ENCODE measurements at regions of chr2 and their contacts with region 1.

Region 1: GRCh38 chr2:68828887-68829708 is 42.1 kb downstream of the BMP10 start:
- DNase-seq: peak; percentile 80 to 90 (median 83)
- H3K4me3 ChIP-seq: peak overlapping the region in 1 of 2 donors; percentile 32
- H3K4me3 Mint-ChIP-seq: peak overlapping the region; percentile 17 to 91 (median 80)
- H3K27ac ChIP-seq: peak overlapping the region; percentile 65
- H3K27ac Mint-ChIP-seq: peak overlapping the region; percentile 90 to 94 (median 92)
- H3K4me1 ChIP-seq: peaks cover 59% of the 10 kb centered on the region
- H3K4me1 Mint-ChIP-seq: peaks cover 50 to 73% (median 62%) of the 10 kb centered on the region in 4 donors
- H3K27me3 ChIP-seq: no peaks in the 10 kb centered on the region
- H3K27me3 Mint-ChIP-seq: no peaks in the 10 kb centered on the region

Region 2: GRCh38 chr2:68237404-68237803 is 591.7 kb before region 1 on chr2:
- CTCF ChIA-PET with region 1: no interaction called
- POLR2A ChIA-PET with region 1: no interaction called
- intact Hi-C with region 1: no loop called
- DNase-seq: no peak
- H3K4me3 ChIP-seq: no peak overlapping the region
- H3K4me3 Mint-ChIP-seq: peak overlapping the region in 3 of 8 donors; percentile 29 to 37 (median 34)
- H3K27ac ChIP-seq: no peak overlapping the region
- H3K27ac Mint-ChIP-seq: peak overlapping the region in 4 of 7 donors; percentile 5 to 87 (median 56)
- H3K4me1 ChIP-seq: peaks cover 90% of the 10 kb centered on the region
- H3K4me1 Mint-ChIP-seq: peaks cover 56 to 89% (median 74%) of the 10 kb centered on the region in 4 donors
- H3K27me3 ChIP-seq: no peaks in the 10 kb centered on the region
- H3K27me3 Mint-ChIP-seq: no peaks in the 10 kb centered on the region

Region 3: GRCh38 chr2:68734688-68735525 is 94.2 kb before region 1 on chr2 and contains the start of gene ARHGAP25:
- CTCF ChIA-PET with region 1: interaction called, 3 read pairs
- POLR2A ChIA-PET with region 1: interaction called, 10 read pairs
- intact Hi-C with region 1: no loop called
- DNase-seq: peak; percentile 58 to 79 (median 61)
- H3K4me3 ChIP-seq: peak within 1 kb of the TSS; percentile 83 to 99
- H3K4me3 Mint-ChIP-seq: no peak within 1 kb of the TSS
- H3K27ac ChIP-seq: peak within 1 kb of the TSS; percentile 81
- H3K27ac Mint-ChIP-seq: no peak within 1 kb of the TSS
- H3K4me1 ChIP-seq: peaks cover 54% of the 10 kb centered on the region
- H3K4me1 Mint-ChIP-seq: peaks cover 23 to 44% (median 34%) of the 10 kb centered on the region in 4 donors
- H3K27me3 ChIP-seq: no peaks in the 10 kb centered on the region
- H3K27me3 Mint-ChIP-seq: no peaks in the 10 kb centered on the region
- total RNA-seq, gene ARHGAP25: 162 to 163 TPM

Region 4: GRCh38 chr2:68742626-68743415 is 86.3 kb before region 1 on chr2:
- CTCF ChIA-PET with region 1: interaction called, 199 read pairs
- POLR2A ChIA-PET with region 1: interaction called, 13 read pairs
- intact Hi-C with region 1: no loop called
- DNase-seq: no peak
- H3K4me3 ChIP-seq: peak overlapping the region in 1 of 2 donors; percentile 29
- H3K4me3 Mint-ChIP-seq: peak overlapping the region; percentile 61 to 88 (median 79)
- H3K27ac ChIP-seq: no peak overlapping the region
- H3K27ac Mint-ChIP-seq: peak overlapping the region in 6 of 7 donors; percentile 78 to 93 (median 81)
- H3K4me1 ChIP-seq: peaks cover 99% of the 10 kb centered on the region
- H3K4me1 Mint-ChIP-seq: peaks cover 78 to 97% (median 89%) of the 10 kb centered on the region in 4 donors
- H3K27me3 ChIP-seq: no peaks in the 10 kb centered on the region
- H3K27me3 Mint-ChIP-seq: no peaks in the 10 kb centered on the region

Region 5: DNA sequence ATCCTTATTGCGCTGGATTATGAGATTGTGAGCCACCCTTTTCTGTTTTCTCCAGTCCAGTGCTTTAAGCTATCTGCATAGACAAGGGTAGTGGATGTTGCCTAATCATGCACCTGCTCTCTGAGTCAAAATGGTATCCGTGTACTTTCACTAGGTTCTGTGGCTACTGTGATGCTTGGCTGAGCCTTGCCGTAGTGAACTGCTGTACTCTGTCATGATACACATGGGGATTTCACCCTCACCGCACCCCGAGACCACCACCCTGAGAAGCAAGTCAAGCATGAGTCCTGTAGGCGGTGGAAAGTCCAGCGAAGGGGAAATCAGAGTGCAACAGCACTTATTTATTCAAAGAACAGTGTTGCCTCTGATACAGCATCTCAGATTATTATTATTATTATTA is 39.5 kb before region 1 on chr2:
- CTCF ChIA-PET with region 1: interaction called, 7 read pairs
- POLR2A ChIA-PET with region 1: no interaction called
- intact Hi-C with region 1: loop called (anchors 5 kb)
- DNase-seq: no peak
- H3K4me3 ChIP-seq: no peak overlapping the region
- H3K4me3 Mint-ChIP-seq: peak overlapping the region in 2 of 8 donors; percentile 4 to 12
- H3K27ac ChIP-seq: peak overlapping the region; percentile 15
- H3K27ac Mint-ChIP-seq: peak overlapping the region in 6 of 7 donors; percentile 71 to 90 (median 82)
- H3K4me1 ChIP-seq: peaks cover 78% of the 10 kb centered on the region
- H3K4me1 Mint-ChIP-seq: peaks cover 41 to 53% (median 48%) of the 10 kb centered on the region in 4 donors
- H3K27me3 ChIP-seq: no peaks in the 10 kb centered on the region
- H3K27me3 Mint-ChIP-seq: no peaks in the 10 kb centered on the region